Ovary (tissue), 10 donors: ENCODE measurements at regions of chr17 and their contacts with region 1.

Region 1: GRCh38 chr17:48363161-48363560 is 66.9 kb downstream of the SKAP1 start:
- DNase-seq: no peak
- H3K4me3 ChIP-seq: no peak overlapping the region
- H3K27ac ChIP-seq: no peak overlapping the region
- H3K4me1 ChIP-seq: no peaks in the 10 kb centered on the region
- H3K27me3 ChIP-seq: no peaks in the 10 kb centered on the region
- CTCF ChIP-seq: no peak
- EP300 ChIP-seq: no peak
- POLR2A ChIP-seq: no peak

Region 2: GRCh38 chr17:48314716-48315115 is 48.4 kb before region 1 on chr17:
- intact Hi-C with region 1: loop called in 1 of 4 experiments (anchors 5 kb)
- DNase-seq: no peak
- H3K4me3 ChIP-seq: no peak overlapping the region
- H3K27ac ChIP-seq: no peak overlapping the region
- H3K4me1 ChIP-seq: no peaks in the 10 kb centered on the region
- H3K27me3 ChIP-seq: no peaks in the 10 kb centered on the region
- CTCF ChIP-seq: no peak
- EP300 ChIP-seq: no peak
- POLR2A ChIP-seq: no peak

Region 3: GRCh38 chr17:48386826-48387225 is 23.7 kb after region 1 on chr17:
- intact Hi-C with region 1: loop called in 1 of 4 experiments (anchors 1 kb)
- DNase-seq: no peak
- H3K4me3 ChIP-seq: no peak overlapping the region
- H3K27ac ChIP-seq: no peak overlapping the region
- H3K4me1 ChIP-seq: no peaks in the 10 kb centered on the region
- H3K27me3 ChIP-seq: no peaks in the 10 kb centered on the region
- CTCF ChIP-seq: no peak
- EP300 ChIP-seq: no peak
- POLR2A ChIP-seq: no peak